Endothelial cell of umbilical vein (primary cell): ENCODE measurements at regions of chr7 and their contacts with region 1.

Region 1: GRCh38 chr7:102991540-102992214 is 78.9 kb downstream of the LRRC17 start:
- DNase-seq: peak; percentile 97
- H3K4me3 ChIP-seq: no peak overlapping the region
- H3K27ac ChIP-seq: peak overlapping the region; percentile 99
- H3K4me1 ChIP-seq: peaks cover 43% of the 10 kb centered on the region
- H3K27me3 ChIP-seq: no peaks in the 10 kb centered on the region
- CTCF ChIP-seq: no peak
- POLR2A ChIP-seq: peak; percentile 83

Region 2: GRCh38 chr7:102891693-102892261 is 99.9 kb before region 1 on chr7:
- CTCF ChIA-PET with region 1: interaction called, 5 read pairs
- POLR2A ChIA-PET with region 1: no interaction called
- dilution Hi-C with region 1: no loop called
- intact Hi-C with region 1: loop called (anchors 1 kb)
- DNase-seq: peak; percentile 94
- H3K4me3 ChIP-seq: no peak overlapping the region
- H3K27ac ChIP-seq: peak overlapping the region; percentile 89
- H3K4me1 ChIP-seq: peaks cover 51% of the 10 kb centered on the region
- H3K27me3 ChIP-seq: no peaks in the 10 kb centered on the region
- CTCF ChIP-seq: no peak
- POLR2A ChIP-seq: no peak

Region 3: GRCh38 chr7:102974366-102975236 is 17.1 kb before region 1 on chr7:
- CTCF ChIA-PET with region 1: interaction called, 4 read pairs
- POLR2A ChIA-PET with region 1: no interaction called
- dilution Hi-C with region 1: no loop called
- intact Hi-C with region 1: loop called (anchors 1 kb)
- DNase-seq: no peak
- H3K4me3 ChIP-seq: no peak overlapping the region
- H3K27ac ChIP-seq: peak overlapping the region; percentile 88
- H3K4me1 ChIP-seq: peaks cover 19% of the 10 kb centered on the region
- H3K27me3 ChIP-seq: no peaks in the 10 kb centered on the region
- CTCF ChIP-seq: no peak
- POLR2A ChIP-seq: no peak